Activated CD4-positive, alpha-beta memory T cell treated with anti-CD3 and anti-CD28 coated beads, Interleukin-2, amount 10 ng/mL, durations not matched to agents 7 days and 5 days (primary cell): ENCODE measurements at regions of chr14 and their contacts with region 1.

Region 1: DNA sequence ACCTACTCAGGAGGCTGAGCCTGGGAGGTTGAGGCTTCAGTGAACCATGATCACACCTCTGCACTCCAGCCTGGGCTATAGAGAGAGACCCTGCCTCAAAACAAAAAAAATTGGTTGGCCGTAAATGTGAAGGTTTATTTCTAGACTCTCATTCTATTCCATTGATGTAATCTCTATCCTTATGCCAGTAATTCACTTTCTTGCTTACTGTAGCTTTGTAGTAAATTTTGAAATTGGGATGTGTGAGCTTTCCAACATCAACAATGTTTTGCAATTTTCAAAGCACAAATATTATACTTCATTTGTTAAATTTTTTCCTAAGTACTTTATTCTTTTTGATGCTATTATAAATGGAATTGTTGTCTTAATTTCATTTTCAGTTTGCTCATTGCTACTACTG is 24.6 kb downstream of the LIN52 start:
- DNase-seq: no peak
- H3K4me3 Mint-ChIP-seq: no peak overlapping the region
- H3K27ac Mint-ChIP-seq: no peak overlapping the region
- H3K4me1 Mint-ChIP-seq: no peaks in the 10 kb centered on the region
- H3K27me3 Mint-ChIP-seq: no peaks in the 10 kb centered on the region

Region 2: GRCh38 chr14:74008843-74009499 is 100.4 kb before region 1 on chr14:
- CTCF ChIA-PET with region 1: no interaction called
- POLR2A ChIA-PET with region 1: no interaction called
- DNase-seq: no peak
- H3K4me3 Mint-ChIP-seq: no peak overlapping the region
- H3K27ac Mint-ChIP-seq: no peak overlapping the region
- H3K4me1 Mint-ChIP-seq: no peaks in the 10 kb centered on the region
- H3K27me3 Mint-ChIP-seq: no peaks in the 10 kb centered on the region

Region 3: GRCh38 chr14:74257078-74257989 is 148.0 kb after region 1 on chr14:
- CTCF ChIA-PET with region 1: interaction called, 15 read pairs
- POLR2A ChIA-PET with region 1: no interaction called
- DNase-seq: peak; percentile 64
- H3K4me3 Mint-ChIP-seq: peak overlapping the region; percentile 71
- H3K27ac Mint-ChIP-seq: no peak overlapping the region
- H3K4me1 Mint-ChIP-seq: peaks cover 8% of the 10 kb centered on the region
- H3K27me3 Mint-ChIP-seq: peaks cover 19% of the 10 kb centered on the region